Dorsolateral prefrontal cortex (tissue), 120 donors: ENCODE measurements at regions of chr1 and their contacts with region 1.

Region 1: DNA sequence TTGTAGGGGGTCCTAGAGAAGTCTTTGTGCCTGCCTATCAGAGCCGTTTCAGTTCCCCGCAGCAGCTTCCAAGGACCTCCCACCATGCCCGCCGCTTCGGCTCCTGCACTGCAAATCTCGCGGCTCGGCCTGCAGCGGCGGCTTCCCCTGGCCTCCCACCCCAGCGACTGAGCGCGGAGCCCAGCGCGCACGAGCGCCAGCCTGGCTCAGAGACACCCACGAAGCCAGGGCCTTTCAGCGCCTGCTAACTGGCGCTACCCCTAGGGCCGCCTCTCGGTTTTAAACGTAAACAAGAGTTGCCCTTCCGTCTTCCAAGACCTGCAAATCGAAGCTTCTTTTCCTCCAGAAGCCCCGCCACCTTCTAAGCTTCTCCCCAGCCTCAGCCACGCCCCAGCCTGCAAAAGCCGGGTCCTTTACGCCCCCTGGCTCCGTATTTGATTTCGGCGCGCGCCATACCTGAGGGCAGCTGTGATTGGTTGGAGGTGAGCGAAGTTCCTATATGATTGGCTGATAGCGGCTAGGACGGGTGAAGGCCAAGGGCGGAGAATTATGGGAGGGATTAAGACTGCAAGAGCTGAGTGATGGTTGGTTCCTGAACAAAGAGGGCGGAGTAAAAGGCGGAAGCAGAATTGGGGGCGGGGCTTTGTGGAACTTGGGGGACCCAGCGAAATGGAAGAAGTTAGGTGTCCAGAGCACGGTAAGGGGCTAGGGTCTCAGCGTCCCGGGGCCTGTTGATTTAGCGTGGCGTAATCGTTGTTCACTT is at the start of gene TTF2:
- DNase-seq: peak; percentile 68 to 94 (median 92)
- H3K4me3 ChIP-seq: peak within 1 kb of the TSS; percentile 65 to 97 (median 84)
- H3K27ac ChIP-seq: peak within 1 kb of the TSS in 15 of 59 donors; percentile 3 to 73 (median 48)
- H3K27me3 ChIP-seq: no peaks in the 10 kb centered on the region
- CTCF ChIP-seq: peak in 47 of 56 donors; percentile 4 to 66 (median 44)
- total RNA-seq, gene TTF2: 6.5 to 31.5 (median 14.0) TPM

Region 2: DNA sequence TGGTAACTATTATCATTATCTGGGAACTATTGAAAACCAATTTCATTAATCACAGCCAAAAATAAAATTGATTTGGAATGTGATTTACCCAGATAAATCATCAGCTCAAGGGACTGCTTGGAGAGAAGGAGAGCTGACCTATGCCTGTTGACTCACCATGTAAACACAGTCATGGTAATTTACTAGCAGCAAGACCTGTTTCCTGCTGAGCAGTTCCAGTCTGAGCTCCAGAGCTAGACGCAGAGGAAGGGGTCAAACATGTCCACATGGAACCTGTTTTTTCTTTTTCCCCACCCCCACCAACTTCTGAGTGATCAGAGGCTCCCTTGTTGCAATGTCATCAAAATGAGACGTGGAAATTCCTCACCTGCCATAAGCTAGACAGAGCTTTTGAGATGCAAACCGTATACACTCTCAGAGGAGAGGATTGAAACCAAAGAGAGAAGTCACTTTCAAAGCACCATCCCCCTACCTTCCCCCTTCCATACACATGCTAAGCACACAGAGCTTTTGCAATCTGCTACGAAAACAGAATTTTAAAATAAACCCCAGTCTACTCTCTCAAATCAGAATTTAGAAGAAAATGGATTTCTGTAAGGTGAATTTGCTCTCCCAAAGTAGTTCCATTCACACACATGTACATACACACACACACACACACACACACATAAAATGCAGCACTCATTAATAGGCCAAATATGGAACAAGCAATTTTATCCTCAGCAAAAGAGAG is 206.0 kb before region 1 on chr1:
- intact Hi-C with region 1: loop called (anchors 2 to 5 kb)
- DNase-seq: no peak
- H3K4me3 ChIP-seq: no peak overlapping the region
- H3K27ac ChIP-seq: peak overlapping the region in 11 of 59 donors; percentile 4 to 69 (median 26)
- H3K27me3 ChIP-seq: no peaks in the 10 kb centered on the region
- CTCF ChIP-seq: no peak

Region 3: DNA sequence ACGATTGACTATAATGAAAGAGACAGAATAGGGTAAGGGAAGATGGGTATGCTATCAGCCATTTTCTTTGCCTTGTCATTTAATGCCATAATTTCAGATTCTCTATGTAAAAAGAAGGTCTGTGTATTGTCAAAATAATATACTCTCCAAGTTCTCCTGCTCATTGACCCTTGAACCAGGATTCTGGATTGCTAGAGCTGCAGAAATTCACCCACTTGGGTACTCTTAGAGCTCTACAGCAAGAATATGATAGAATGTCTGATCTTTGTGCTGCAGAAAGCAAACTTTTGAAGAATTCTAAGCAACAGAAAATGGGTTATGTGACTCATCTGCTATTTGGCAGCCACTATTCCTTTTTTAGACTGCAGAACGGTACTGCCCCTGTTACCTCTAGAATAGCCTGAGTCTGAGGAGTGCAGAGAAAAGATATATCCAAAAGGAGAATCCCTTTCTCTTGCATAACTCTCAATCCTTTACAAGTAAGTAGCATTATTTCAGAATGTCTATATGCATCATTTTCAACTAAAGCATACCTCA is 467.8 kb after region 1 on chr1:
- intact Hi-C with region 1: loop called in 1 of 2 experiments (anchors 10 kb)
- DNase-seq: no peak
- H3K4me3 ChIP-seq: no peak overlapping the region
- H3K27ac ChIP-seq: peak overlapping the region in 28 of 59 donors; percentile 4 to 63 (median 26)
- H3K27me3 ChIP-seq: no peaks in the 10 kb centered on the region
- CTCF ChIP-seq: no peak